ENCODE measurements at regions of chr4 and their contacts with region 1.

Region 1: DNA sequence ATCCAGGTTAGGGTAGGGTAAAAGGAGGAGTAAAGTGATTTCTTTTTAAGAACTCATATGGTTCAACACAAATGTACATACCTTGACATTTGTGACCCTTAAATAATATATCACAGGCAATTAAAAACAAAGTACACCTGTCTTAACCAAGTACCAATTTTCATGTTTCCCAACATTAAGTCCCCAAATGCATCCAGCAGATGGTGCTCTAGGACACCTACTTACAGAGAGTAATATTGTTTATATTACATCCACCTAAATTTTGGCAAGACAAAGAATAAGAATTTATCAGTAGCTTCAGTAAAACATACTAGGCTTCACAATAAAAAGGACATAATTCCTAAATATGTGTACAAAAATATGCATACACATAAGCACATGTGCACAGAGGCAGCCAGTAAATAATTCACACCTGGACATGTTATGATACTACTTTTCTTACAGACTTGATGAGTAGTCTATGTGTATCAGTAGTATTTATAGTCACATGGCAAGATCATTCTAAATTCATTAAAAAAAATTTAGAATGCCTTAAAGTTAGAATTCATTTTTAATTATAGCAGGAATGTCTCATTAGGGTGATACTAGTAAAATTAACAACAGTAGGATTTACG is 219.7 kb downstream of the DCLK2 start:
- DNase-seq: peak in 24 of 42 donors; percentile 11 to 75 (median 46)

Region 2: DNA sequence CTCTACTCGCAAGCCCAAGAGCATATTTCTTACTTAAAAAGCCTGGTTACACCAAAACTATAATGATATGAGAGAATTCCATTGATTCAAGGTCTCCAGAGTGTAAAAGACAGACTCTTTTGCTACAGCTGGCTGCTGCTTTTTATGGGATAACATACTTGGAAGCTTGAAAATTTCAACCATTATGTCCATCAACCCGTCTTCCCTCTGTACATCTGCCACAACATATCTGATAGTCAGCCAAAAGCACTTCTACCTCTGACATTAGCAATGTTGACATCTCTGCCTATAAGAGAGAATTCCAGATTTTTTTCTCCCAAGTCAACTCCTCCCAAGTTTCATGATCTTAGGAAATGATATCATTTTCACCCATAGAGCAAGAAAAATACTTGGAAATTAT is 428.0 kb before region 1 on chr4:
- intact Hi-C with region 1: no loop called
- DNase-seq: no peak

Region 3: GRCh38 chr4:150867148-150867547 is 569.2 kb after region 1 on chr4:
- intact Hi-C with region 1: loop called (anchors 5 kb)
- DNase-seq: peak in 10 of 42 donors; percentile 23 to 76 (median 57)

Region 4: GRCh38 chr4:150962245-150962644 is 664.3 kb after region 1 on chr4:
- intact Hi-C with region 1: no loop called
- DNase-seq: no peak